Activated CD4-positive, alpha-beta T cell treated with anti-CD3 and anti-CD28 coated beads for 36 hours (primary cell): ENCODE measurements at regions of chr14 and their contacts with region 1.

Region 1: GRCh38 chr14:64823305-64823861 is 56.3 kb downstream of the SPTB start:
- DNase-seq: peak; percentile 84
- ATAC-seq: peak; percentile 98
- H3K4me3 Mint-ChIP-seq: no peak overlapping the region
- H3K27ac Mint-ChIP-seq: no peak overlapping the region
- H3K4me1 Mint-ChIP-seq: no peaks in the 10 kb centered on the region
- H3K27me3 Mint-ChIP-seq: peaks cover 8% of the 10 kb centered on the region

Region 2: DNA sequence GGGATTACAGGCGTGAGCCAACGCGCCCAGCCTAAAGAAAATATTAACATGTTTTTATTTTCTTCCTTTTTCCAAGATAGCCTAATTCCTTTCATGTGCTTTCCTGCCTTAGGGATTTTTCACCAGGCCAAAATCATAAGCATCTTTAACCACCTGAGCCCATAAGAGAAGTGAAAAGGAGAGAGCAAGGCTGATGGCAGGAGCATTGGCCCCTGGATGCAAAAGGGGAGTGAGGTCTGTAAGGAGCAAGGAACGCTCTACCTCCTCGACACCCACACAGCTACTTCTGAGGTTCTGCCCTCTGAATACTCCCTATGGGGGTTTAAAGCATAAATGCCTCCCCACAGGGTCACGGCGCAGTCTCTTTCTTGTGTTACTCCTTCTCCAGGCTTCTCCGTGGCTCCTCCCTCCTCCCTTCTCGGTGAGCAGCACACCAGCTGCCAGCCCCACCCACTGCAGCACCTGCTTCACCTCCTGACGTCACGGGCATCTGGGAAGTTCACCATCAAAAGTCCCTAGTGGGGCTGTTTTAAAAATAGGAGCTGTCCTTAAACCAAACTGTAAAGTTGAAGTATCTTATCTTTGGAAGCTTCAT is 11.1 kb before region 1 on chr14:
- CTCF ChIA-PET with region 1: interaction called, 12 read pairs
- POLR2A ChIA-PET with region 1: no interaction called
- intact Hi-C with region 1: no loop called
- DNase-seq: peak; percentile 67
- ATAC-seq: peak; percentile 78
- H3K4me3 Mint-ChIP-seq: no peak overlapping the region
- H3K27ac Mint-ChIP-seq: no peak overlapping the region
- H3K4me1 Mint-ChIP-seq: peaks cover 5% of the 10 kb centered on the region
- H3K27me3 Mint-ChIP-seq: peaks cover 4% of the 10 kb centered on the region

Region 3: GRCh38 chr14:64835431-64835830 is 12.0 kb after region 1 on chr14:
- CTCF ChIA-PET with region 1: interaction called, 10 read pairs
- POLR2A ChIA-PET with region 1: no interaction called
- intact Hi-C with region 1: no loop called
- DNase-seq: no peak
- ATAC-seq: no peak
- H3K4me3 Mint-ChIP-seq: no peak overlapping the region
- H3K27ac Mint-ChIP-seq: no peak overlapping the region
- H3K4me1 Mint-ChIP-seq: no peaks in the 10 kb centered on the region
- H3K27me3 Mint-ChIP-seq: peaks cover 15% of the 10 kb centered on the region

Region 4: DNA sequence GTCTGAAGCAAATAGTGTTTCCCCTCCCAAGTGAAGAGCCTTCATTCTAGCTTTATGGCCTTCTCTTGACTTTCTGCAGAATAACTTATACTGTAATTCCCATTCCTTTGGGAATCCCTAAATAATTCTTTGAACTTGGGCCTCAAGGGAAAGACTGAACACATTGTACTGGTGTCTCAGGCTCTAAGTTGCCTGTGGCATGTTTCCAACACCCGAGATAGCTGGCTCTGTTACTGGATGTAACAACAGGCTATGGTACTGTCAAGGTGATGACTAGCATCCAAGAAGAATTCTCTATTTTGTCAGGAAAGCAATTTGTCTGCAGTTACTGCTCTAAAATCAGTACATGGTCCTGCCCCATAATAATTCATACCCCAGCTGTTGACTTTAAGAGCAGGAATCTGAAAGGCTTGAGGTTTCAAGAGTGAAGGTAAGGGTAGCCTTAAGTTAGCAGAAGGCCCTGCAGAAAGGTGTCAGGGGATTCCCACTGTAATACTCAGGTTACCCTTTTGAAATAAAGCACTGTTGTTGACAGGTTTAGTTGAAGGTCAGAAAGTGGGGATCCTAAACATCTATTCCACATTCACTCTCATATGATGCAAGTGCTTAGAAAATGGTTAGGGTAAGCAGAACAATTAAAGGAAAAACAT is 113.9 kb after region 1 on chr14:
- CTCF ChIA-PET with region 1: interaction called, 15 read pairs
- POLR2A ChIA-PET with region 1: no interaction called
- intact Hi-C with region 1: no loop called
- DNase-seq: no peak
- ATAC-seq: no peak
- H3K4me3 Mint-ChIP-seq: no peak overlapping the region
- H3K27ac Mint-ChIP-seq: peak overlapping the region; percentile 49
- H3K4me1 Mint-ChIP-seq: peaks cover 50% of the 10 kb centered on the region
- H3K27me3 Mint-ChIP-seq: no peaks in the 10 kb centered on the region